Aorta (tissue), 5 donors: ENCODE measurements at regions of chr13 and their contacts with region 1.

Region 1: DNA sequence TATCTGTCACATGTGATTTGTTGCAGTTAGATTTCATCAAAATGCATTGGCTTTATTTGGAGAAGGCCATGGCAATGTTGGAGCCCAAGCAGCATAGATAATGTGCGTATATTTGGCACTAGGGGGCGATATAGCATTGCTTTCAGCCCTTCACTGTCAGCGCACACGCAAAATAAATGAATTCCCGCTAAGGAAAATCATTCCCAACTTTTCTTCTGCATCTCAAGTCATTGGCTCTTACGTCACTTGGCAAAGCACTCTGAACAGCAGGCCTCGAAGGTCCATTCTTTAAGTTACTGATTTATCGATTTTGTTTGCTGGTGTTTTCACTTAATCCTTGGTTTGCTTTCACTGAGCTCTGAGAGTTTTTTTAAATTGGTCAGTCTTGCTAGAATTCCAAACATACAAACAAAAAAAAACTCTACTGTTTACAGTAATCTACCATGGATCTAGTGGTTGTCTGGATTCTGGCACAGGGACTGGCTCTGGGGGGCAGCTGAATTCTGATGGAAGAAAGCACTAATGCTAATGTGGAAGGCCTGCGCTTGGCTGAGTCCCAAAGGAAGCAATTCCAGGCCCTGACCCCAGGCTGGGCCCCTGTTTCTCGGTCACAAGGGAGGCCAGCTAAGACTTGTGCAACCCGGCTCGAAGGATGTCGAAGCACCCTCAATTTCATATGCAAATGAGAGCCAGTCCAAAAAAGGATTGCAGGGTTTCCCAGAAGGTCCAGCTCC is 97.7 kb upstream of the IPO5 start:
- DNase-seq: peak; percentile 55 to 77
- ATAC-seq: peak; percentile 86
- H3K4me3 ChIP-seq: no peak overlapping the region
- H3K27ac ChIP-seq: no peak overlapping the region
- H3K4me1 ChIP-seq: no peaks in the 10 kb centered on the region
- H3K27me3 ChIP-seq: no peaks in the 10 kb centered on the region

Region 2: GRCh38 chr13:98004111-98004510 is 148.4 kb after region 1 on chr13:
- intact Hi-C with region 1: loop called in 1 of 2 experiments (anchors 10 kb)
- DNase-seq: no peak
- ATAC-seq: no peak
- H3K4me3 ChIP-seq: no peak overlapping the region
- H3K27ac ChIP-seq: no peak overlapping the region
- H3K4me1 ChIP-seq: no peaks in the 10 kb centered on the region
- H3K27me3 ChIP-seq: no peaks in the 10 kb centered on the region

Region 3: GRCh38 chr13:98429977-98430736 is 574.4 kb after region 1 on chr13:
- intact Hi-C with region 1: loop called in 1 of 2 experiments (anchors 10 kb)
- DNase-seq: no peak
- ATAC-seq: no peak
- H3K4me3 ChIP-seq: no peak overlapping the region
- H3K27ac ChIP-seq: no peak overlapping the region
- H3K4me1 ChIP-seq: no peaks in the 10 kb centered on the region
- H3K27me3 ChIP-seq: no peaks in the 10 kb centered on the region